ENCODE measurements at regions of chr7 and their contacts with region 1.

Region 1: GRCh38 chr7:139915864-139916716 is 87.0 kb downstream of the TBXAS1 start:
- DNase-seq: peak; percentile 86
- H3K4me3 Mint-ChIP-seq: peak overlapping the region; percentile 45
- H3K27ac Mint-ChIP-seq: peak overlapping the region; percentile 59
- H3K4me1 Mint-ChIP-seq: peaks cover 23% of the 10 kb centered on the region
- H3K27me3 Mint-ChIP-seq: peaks cover 7% of the 10 kb centered on the region

Region 2: GRCh38 chr7:139645572-139646523 is 270.2 kb before region 1 on chr7:
- intact Hi-C with region 1: loop called (anchors 10 kb)
- DNase-seq: peak; percentile 94
- H3K4me3 Mint-ChIP-seq: no peak overlapping the region
- H3K27ac Mint-ChIP-seq: no peak overlapping the region
- H3K4me1 Mint-ChIP-seq: peaks cover 51% of the 10 kb centered on the region
- H3K27me3 Mint-ChIP-seq: no peaks in the 10 kb centered on the region

Region 3: DNA sequence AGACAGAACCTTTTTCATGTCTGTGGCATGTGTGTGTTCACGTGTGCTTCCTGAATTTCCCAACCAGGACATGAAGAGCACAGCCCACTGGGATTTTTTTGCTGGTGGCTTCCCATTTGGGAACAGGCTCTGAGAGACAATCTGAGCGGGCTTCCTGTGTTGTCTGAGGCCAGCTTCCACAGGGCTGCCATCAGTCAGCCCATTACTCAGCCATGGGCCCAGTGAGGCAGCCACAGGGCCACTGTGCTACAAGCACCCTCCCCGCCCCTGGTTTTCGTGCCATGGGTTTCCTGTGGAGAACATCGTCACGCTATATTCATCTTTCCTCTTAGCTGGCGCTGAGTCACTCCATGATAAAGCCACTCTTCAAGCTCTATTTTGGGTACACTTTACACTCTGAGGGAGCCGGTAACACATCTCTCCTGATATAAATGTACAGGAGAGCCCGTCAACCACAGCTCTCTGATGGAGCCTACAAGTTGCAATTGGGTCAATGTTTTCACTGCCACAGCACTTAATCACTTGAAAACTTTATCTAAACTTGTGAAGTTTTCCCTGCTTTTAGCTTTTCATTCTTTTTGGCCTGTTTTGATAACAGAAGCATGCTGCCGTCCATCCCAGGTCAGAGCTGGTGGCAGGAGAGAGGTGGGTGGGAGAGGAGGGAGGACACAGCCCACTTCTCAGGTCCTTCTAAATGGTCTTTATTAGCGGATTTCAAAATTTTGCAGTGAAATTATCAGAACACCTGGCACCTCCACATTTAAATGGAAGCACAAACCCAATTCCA is 235.2 kb before region 1 on chr7:
- intact Hi-C with region 1: loop called (anchors 1 kb)
- DNase-seq: peak; percentile 88
- H3K4me3 Mint-ChIP-seq: peak overlapping the region; percentile 67
- H3K27ac Mint-ChIP-seq: peak overlapping the region; percentile 91
- H3K4me1 Mint-ChIP-seq: peaks cover 48% of the 10 kb centered on the region
- H3K27me3 Mint-ChIP-seq: no peaks in the 10 kb centered on the region

Region 4: DNA sequence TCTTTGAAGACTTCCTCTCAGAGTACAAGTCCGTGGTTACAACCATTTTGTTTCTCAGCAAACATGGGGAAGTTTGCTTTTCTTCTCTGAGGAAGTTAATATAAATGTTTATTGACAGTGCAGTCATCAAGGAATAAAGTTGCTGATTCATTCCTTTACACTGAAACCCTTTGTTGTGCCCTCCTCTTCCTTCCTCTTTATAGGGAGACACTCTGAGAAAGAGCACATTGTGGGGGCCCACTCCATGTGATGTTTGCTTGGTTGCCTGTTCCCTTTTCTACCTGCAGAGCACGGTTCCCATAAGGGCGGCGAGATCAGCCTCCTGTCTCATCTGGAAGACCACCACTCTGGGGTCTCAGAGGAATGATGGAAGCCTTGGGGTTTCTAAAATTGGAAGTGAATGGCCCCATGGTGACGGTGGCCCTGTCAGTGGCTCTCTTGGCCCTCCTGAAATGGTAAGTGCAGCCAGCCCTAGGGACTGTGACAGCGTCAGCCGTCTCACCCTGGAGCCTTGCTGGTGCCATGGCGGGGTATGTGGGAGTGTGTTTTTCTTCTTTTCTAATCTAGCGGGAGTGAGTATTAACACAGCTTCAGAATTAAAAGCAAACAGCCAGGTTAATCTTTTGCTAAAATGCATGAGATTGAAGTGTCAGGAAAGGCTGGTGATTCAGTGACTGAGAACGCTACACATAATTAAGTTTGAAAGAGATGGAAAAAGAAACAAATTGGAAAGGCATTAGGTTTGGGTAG is 86.9 kb before region 1 on chr7 and contains the start of gene TBXAS1:
- intact Hi-C with region 1: loop called (anchors 1 kb)
- DNase-seq: no peak
- H3K4me3 Mint-ChIP-seq: peak within 1 kb of the TSS; percentile 57
- H3K27ac Mint-ChIP-seq: peak within 1 kb of the TSS; percentile 75
- H3K4me1 Mint-ChIP-seq: peaks cover 22% of the 10 kb centered on the region
- H3K27me3 Mint-ChIP-seq: peaks cover 11% of the 10 kb centered on the region
- total RNA-seq, gene TBXAS1: 1.8 and 3.5 TPM in 2 replicates

Region 5: DNA sequence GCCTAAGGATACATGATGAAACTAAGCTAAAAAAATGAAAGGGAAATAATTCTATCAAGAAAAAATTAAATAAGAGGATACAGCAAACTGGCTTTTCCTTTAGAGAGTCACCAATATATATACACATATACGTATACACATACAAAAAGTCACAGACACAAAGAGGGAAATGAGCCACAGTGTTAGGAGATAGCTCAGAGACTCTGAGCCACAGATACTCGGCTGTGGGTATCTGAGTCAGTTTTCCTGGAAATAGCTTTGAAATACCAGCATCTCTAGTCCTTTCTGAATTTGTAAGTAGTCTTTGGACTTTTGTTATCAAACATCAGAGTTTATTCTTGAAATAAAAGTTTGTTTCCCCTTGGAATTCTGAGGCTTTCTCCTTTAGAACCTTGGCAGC is 24.8 kb after region 1 on chr7:
- intact Hi-C with region 1: loop called (anchors 1 kb)
- DNase-seq: peak; percentile 62
- H3K4me3 Mint-ChIP-seq: no peak overlapping the region
- H3K27ac Mint-ChIP-seq: no peak overlapping the region
- H3K4me1 Mint-ChIP-seq: peaks cover 12% of the 10 kb centered on the region
- H3K27me3 Mint-ChIP-seq: peaks cover 23% of the 10 kb centered on the region

Region 6: GRCh38 chr7:139976838-139977656 is 61.0 kb after region 1 on chr7:
- intact Hi-C with region 1: loop called (anchors 1 kb)
- DNase-seq: no peak
- H3K4me3 Mint-ChIP-seq: no peak overlapping the region
- H3K27ac Mint-ChIP-seq: no peak overlapping the region
- H3K4me1 Mint-ChIP-seq: peaks cover 18% of the 10 kb centered on the region
- H3K27me3 Mint-ChIP-seq: peaks cover 10% of the 10 kb centered on the region

Measured in activated CD4-positive, alpha-beta T cell treated with anti-CD3 and anti-CD28 coated beads, Interleukin-2, amount 10 ng/mL, durations not matched to agents 24 days and 14 days (primary cell).